RWPE1 (cell line): ENCODE measurements at regions of chr2 and their contacts with region 1.

Region 1: DNA sequence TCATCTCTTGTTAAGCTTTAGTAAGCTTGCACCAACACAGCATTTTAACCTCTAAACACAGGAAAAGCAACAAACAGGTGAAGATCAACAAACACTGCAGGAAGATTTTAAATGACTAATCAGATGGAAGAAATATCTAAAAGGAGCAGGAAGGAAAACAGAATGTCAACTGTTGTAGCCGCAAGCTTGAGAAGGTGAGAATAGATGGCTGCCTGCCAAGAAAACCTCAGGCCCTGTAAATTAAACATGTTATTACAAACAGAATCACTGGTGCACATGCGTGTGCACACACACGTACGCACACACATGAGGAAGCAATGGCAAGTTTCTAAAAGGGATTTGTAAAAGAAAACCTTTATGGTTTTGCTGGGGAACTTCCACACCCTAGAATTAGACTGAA is 257.8 kb upstream of the GALNT5 start:
- DNase-seq: no peak
- H3K27ac ChIP-seq: no peak overlapping the region
- CTCF ChIP-seq: no peak

Region 2: GRCh38 chr2:157876066-157876787 is 876.6 kb after region 1 on chr2 and contains the start of gene ACVR1:
- CTCF ChIA-PET with region 1: interaction called, 10 read pairs
- POLR2A ChIA-PET with region 1: no interaction called
- DNase-seq: peak; percentile 85
- H3K27ac ChIP-seq: peak within 1 kb of the TSS; percentile 91
- CTCF ChIP-seq: peak; percentile 27; the same call in 1 of the 2 replicates